Heart left ventricle (tissue), 16 donors: ENCODE measurements at regions of chr11 and their contacts with region 1.

Region 1: GRCh38 chr11:125874556-125875124 is 12.8 kb upstream of the HYLS1 start:
- DNase-seq: peak in 4 of 5 donors; percentile 41 to 55 (median 48)
- ATAC-seq: peak in 3 of 4 donors; percentile 91 to 98 (median 93)
- H3K4me3 ChIP-seq: peak overlapping the region in 8 of 12 donors; percentile 12 to 38 (median 28)
- H3K27ac ChIP-seq: no peak overlapping the region
- H3K4me1 ChIP-seq: no peaks in the 10 kb centered on the region
- H3K27me3 ChIP-seq: no peaks in the 10 kb centered on the region
- CTCF ChIP-seq: peak; percentile 60 to 82 (median 72)
- POLR2A ChIP-seq: no peak

Region 2: GRCh38 chr11:124961972-124962609 is 912.5 kb before region 1 on chr11:
- intact Hi-C with region 1: loop called in 7 of 10 experiments (anchors 5 to 10 kb)
- DNase-seq: no peak
- ATAC-seq: peak in 3 of 4 donors; percentile 81 to 85 (median 83)
- H3K4me3 ChIP-seq: no peak overlapping the region
- H3K27ac ChIP-seq: no peak overlapping the region
- H3K4me1 ChIP-seq: peaks cover 0 to 3% (median 0%) of the 10 kb centered on the region in 12 donors
- H3K27me3 ChIP-seq: no peaks in the 10 kb centered on the region
- CTCF ChIP-seq: peak; percentile 55 to 78 (median 70)
- POLR2A ChIP-seq: no peak

Region 3: GRCh38 chr11:125568970-125569914 is 305.4 kb before region 1 on chr11 and contains the start of gene EI24:
- intact Hi-C with region 1: loop called in 1 of 10 experiments (anchors 10 kb)
- DNase-seq: peak; percentile 92 to 96 (median 95)
- ATAC-seq: peak; percentile 100
- H3K4me3 ChIP-seq: peak within 1 kb of the TSS; percentile 84 to 100 (median 96)
- H3K27ac ChIP-seq: peak within 1 kb of the TSS; percentile 71 to 93 (median 87)
- H3K4me1 ChIP-seq: peaks cover 0 to 22% (median 10%) of the 10 kb centered on the region in 12 donors
- H3K27me3 ChIP-seq: no peaks in the 10 kb centered on the region
- CTCF ChIP-seq: peak; percentile 62 to 93 (median 75)
- POLR2A ChIP-seq: peak; percentile 22 to 88
- total RNA-seq, gene EI24: 47.7 to 72.4 (median 53.8) TPM